ENCODE measurements at regions of chr14 and their contacts with region 1.

Region 1: DNA sequence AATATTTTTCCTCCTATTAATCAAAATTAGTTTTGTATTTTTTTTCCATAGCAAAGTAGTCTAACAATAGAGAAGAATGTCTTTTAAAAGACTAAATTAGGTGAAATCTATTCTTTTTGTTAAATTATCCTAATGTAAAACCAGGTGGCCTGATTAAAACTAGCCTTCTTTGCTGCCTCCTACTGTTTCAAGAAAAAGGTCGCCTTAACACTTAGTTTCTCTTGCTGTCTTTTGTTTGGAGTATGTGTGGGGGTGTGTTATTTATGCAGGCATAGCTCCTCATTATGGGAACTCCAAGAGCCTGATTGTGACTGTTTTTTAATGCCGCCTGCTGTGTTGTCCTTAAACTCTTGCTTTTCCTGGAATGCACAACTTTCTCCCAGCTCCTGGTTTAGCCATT is 855.3 kb downstream of the DIO2 start:
- DNase-seq: no peak
- H3K4me3 ChIP-seq: no peak overlapping the region
- H3K27ac ChIP-seq: no peak overlapping the region
- H3K4me1 ChIP-seq: no peaks in the 10 kb centered on the region
- H3K27me3 ChIP-seq: no peaks in the 10 kb centered on the region
- CTCF ChIP-seq: no peak
- POLR2A ChIP-seq: no peak

Region 2: GRCh38 chr14:79011091-79011919 is 344.7 kb before region 1 on chr14:
- intact Hi-C with region 1: loop called (anchors 5 kb)
- DNase-seq: peak; percentile 25
- H3K4me3 ChIP-seq: no peak overlapping the region
- H3K27ac ChIP-seq: no peak overlapping the region
- H3K4me1 ChIP-seq: no peaks in the 10 kb centered on the region
- H3K27me3 ChIP-seq: no peaks in the 10 kb centered on the region
- CTCF ChIP-seq: peak; percentile 37 to 80 (median 46)
- POLR2A ChIP-seq: no peak

Region 3: GRCh38 chr14:79306546-79306945 is 49.5 kb before region 1 on chr14:
- intact Hi-C with region 1: no loop called
- DNase-seq: no peak
- H3K4me3 ChIP-seq: no peak overlapping the region
- H3K27ac ChIP-seq: no peak overlapping the region
- H3K4me1 ChIP-seq: no peaks in the 10 kb centered on the region
- H3K27me3 ChIP-seq: no peaks in the 10 kb centered on the region
- CTCF ChIP-seq: no peak
- POLR2A ChIP-seq: no peak

Region 4: GRCh38 chr14:79871136-79871535 is 515.1 kb after region 1 on chr14:
- intact Hi-C with region 1: loop called (anchors 10 kb)
- DNase-seq: no peak
- H3K4me3 ChIP-seq: no peak overlapping the region
- H3K27ac ChIP-seq: no peak overlapping the region
- H3K4me1 ChIP-seq: no peaks in the 10 kb centered on the region
- H3K27me3 ChIP-seq: no peaks in the 10 kb centered on the region
- CTCF ChIP-seq: no peak
- POLR2A ChIP-seq: no peak